K562 (cell line): ENCODE measurements at regions of chr12 and their contacts with region 1.

Region 1: GRCh38 chr12:68844788-68845695 is 37.1 kb downstream of the MDM2 start:
- DNase-seq: no peak
- ATAC-seq: peak; percentile 58
- H3K4me3 ChIP-seq: no peak overlapping the region
- H3K27ac ChIP-seq: no peak overlapping the region
- H3K4me1 ChIP-seq: no peaks in the 10 kb centered on the region
- H3K27me3 ChIP-seq: no peaks in the 10 kb centered on the region
- CTCF ChIP-seq: no peak
- EP300 ChIP-seq: no peak
- POLR2A ChIP-seq: peak; percentile 47; the same call in 1 of the 2 replicates
- RAD21 ChIP-seq: no peak

Region 2: GRCh38 chr12:68792952-68793835 is 51.8 kb before region 1 on chr12:
- CTCF ChIA-PET with region 1: no interaction called
- POLR2A ChIA-PET with region 1: no interaction called
- in situ Hi-C with region 1: no loop called
- intact Hi-C with region 1: no loop called
- DNase-seq: peak; percentile 72 to 95 (median 72)
- ATAC-seq: peak; percentile 99
- H3K4me3 ChIP-seq: no peak overlapping the region
- H3K27ac ChIP-seq: no peak overlapping the region; the same call in 2 of the 3 replicates
- H3K4me1 ChIP-seq: peaks cover 0 to 4% of the 10 kb centered on the region in 2 experiments; a peak in 1 of 5 replicates
- H3K27me3 ChIP-seq: no peaks in the 10 kb centered on the region
- CTCF ChIP-seq: no peak
- EP300 ChIP-seq: no peak
- POLR2A ChIP-seq: no peak
- RAD21 ChIP-seq: no peak

Region 3: GRCh38 chr12:68831272-68831671 is 13.8 kb before region 1 on chr12:
- CTCF ChIA-PET with region 1: no interaction called
- POLR2A ChIA-PET with region 1: interaction called, 12 read pairs
- in situ Hi-C with region 1: no loop called
- intact Hi-C with region 1: no loop called
- DNase-seq: no peak
- ATAC-seq: peak; percentile 55
- H3K4me3 ChIP-seq: no peak overlapping the region
- H3K27ac ChIP-seq: no peak overlapping the region
- H3K4me1 ChIP-seq: no peaks in the 10 kb centered on the region
- H3K27me3 ChIP-seq: no peaks in the 10 kb centered on the region
- CTCF ChIP-seq: no peak
- EP300 ChIP-seq: no peak
- POLR2A ChIP-seq: no peak
- RAD21 ChIP-seq: no peak